ENCODE measurements at regions of chr1 and their contacts with region 1.

Region 1: DNA sequence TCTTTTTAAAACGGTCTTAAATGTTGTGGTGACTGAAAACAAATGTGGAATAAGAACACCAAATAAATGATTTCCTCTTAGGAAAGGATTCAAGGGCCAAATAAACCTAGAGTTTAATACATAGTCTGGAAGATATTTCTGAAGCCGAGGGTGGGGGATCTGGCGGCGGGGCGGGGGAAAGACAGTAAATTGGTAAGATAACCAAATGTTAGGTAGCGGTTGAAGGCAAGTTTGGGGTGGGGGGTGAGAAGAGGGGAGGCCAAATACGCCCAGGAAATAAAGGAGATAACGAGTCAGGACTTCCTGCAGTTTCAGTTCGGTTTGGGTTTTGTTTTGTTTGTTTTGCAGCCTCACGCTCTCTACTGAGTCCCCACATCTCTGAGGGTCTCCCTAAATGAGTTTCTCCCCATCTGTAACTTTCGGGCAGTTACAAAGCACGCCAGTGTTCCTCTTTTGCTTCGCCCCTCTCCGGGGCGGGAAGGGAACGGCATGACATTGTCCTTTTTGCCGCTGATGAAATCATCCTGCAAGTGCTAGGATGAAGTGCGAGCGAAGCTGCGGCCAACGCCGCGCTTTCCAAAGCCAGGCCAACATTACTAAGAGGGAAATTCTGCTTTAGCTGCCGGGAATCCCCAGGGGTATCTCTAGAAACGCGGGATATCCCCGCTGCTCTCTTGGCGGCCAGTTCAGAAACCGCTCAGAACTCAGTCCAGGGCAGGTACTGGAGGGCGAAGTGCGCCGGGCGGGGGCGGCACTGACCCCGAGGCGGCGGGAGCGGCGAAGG is 844 bp downstream of the NIBAN1 start:
- DNase-seq: peak; percentile 77
- CTCF ChIP-seq: peak; percentile 17

Region 2: DNA sequence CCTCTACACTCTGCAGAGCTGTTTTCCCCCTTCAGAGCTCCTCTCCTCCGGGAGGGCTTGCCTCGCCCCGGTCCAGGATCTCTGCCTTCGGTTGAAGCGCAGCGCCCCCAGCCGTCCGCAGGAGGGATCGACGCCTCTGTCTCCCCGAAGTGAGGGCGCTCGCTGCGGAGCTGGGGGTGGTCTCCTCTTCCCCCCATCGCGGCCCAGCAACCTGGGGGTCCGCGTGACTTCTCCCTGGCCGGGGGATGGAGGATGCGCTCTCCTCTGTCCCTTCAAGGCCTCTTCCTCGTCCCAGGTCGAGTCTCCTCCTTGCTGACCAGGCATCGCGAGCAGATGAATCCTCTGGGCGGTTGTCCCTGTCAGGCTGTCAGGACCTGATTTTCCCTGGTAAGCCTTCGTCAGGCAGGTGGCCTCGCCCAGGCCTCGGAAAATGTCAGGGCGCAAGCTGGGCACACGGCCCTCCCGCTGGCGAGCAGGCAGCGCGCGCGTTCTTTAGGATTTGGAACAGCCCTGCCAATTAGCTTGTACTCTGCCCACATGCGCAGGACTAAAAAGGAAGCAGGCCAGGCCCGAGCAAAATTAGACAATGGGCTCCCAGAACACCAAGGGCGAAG is 309.3 kb before region 1 on chr1:
- in situ Hi-C with region 1: no loop called
- DNase-seq: peak; percentile 85
- CTCF ChIP-seq: peak; percentile 90

Region 3: DNA sequence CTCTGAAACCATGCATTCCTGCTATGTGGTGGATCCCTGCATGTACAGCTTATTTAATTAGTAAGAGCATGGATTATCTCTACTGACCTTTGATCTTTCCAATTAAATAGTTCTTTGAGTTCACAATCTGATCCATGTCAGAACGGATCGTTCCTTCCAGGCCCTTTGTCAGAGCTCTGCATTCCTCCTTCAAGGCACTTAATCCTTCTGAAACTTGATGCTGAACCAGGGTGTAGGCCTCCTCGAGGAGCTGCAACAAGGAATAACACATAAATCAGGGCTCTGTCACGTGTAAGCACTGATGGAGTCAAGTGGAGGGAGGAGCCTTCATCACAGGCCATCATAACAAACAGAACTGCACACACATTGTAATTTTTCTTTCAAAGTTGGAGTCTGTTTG is 150.4 kb before region 1 on chr1:
- in situ Hi-C with region 1: loop called (anchors 5 kb)
- DNase-seq: no peak
- CTCF ChIP-seq: no peak

Region 4: GRCh38 chr1:184870319-184870718 is 103.1 kb before region 1 on chr1:
- in situ Hi-C with region 1: loop called (anchors 10 kb)
- DNase-seq: no peak
- CTCF ChIP-seq: no peak

Measured in GM13976 (cell line).